Gastrocnemius medialis (tissue), 4 donors: ENCODE measurements at regions of chr7 and their contacts with region 1.

Region 1: GRCh38 chr7:105759670-105760550 is 116.5 kb downstream of the ATXN7L1 start:
- DNase-seq: no peak
- ATAC-seq: peak; percentile 60
- H3K4me3 ChIP-seq: no peak overlapping the region
- H3K27ac ChIP-seq: no peak overlapping the region
- H3K4me1 ChIP-seq: no peaks in the 10 kb centered on the region
- H3K27me3 ChIP-seq: no peaks in the 10 kb centered on the region
- CTCF ChIP-seq: peak; percentile 35 to 64 (median 59)
- POLR2A ChIP-seq: no peak

Region 2: DNA sequence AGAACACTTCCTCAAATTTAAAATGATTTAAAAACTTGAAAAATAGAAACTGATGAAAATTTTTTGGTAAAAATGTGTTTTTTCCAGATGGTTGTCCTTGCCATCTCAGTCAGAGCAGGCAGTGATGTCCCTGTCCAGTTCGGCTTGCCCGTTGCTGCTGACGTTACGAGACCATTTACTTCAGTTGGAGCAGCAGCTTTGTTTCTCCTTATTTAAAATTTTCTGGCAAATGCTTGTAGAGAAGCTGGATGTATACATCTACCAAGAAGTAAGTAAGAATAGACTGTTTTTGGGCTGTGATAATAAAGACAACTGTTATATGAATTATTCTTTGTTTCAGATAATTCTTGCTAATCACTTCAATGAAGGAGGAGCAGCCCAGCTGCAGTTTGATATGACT is 194.7 kb before region 1 on chr7:
- in situ Hi-C with region 1: no loop called
- intact Hi-C with region 1: no loop called
- DNase-seq: no peak
- ATAC-seq: no peak
- H3K4me3 ChIP-seq: no peak overlapping the region
- H3K27ac ChIP-seq: no peak overlapping the region
- H3K4me1 ChIP-seq: no peaks in the 10 kb centered on the region
- H3K27me3 ChIP-seq: no peaks in the 10 kb centered on the region
- CTCF ChIP-seq: no peak
- POLR2A ChIP-seq: no peak

Region 3: DNA sequence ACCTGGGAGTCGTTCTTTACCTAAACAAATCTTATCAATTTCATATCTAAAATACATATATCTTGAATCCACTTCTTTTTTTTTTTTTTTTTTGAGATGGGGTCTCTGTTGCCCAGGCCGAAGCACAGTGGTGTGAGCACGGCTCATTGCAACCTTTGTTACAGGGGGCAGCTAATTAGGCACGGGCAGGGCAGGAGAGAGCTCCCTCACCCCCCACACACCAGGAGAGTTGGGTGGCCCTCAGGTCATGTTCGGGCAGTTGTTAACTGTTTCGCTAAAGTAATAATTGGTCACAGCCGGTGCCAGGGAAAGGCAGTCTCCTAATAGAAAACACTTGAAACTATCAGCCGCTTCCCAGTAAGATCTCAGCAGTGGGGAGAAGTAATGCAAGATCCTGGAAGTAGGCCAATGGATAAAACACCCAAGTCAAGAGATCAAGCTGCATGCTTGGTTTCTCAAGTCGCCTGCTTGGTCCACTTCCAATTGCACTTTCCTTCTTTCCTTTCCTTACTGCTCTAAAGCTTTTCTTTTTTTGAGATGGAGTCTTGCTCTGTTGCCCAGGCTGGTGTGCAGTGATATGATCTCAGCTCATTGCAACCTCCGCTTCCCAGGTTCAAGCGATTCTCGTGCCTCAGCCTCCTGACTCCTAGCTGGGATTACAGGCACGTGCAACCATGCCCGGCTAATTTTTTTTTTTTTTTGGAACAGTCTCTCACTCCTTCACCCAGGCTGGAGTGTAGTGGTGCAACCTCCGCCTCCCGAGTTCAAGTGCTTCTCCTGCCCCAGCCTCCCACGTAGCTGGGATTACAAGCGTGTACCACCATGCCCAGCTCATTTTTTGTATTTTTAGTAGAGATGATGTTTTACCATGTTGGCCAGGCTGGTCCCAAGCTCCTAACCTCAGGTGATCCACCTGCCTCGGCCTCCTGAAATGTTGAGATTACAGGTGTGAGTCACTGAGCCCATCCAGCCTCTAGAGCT is 157.3 kb before region 1 on chr7:
- in situ Hi-C with region 1: no loop called
- intact Hi-C with region 1: no loop called
- DNase-seq: no peak
- ATAC-seq: no peak
- H3K4me3 ChIP-seq: no peak overlapping the region
- H3K27ac ChIP-seq: no peak overlapping the region
- H3K4me1 ChIP-seq: no peaks in the 10 kb centered on the region
- H3K27me3 ChIP-seq: no peaks in the 10 kb centered on the region
- CTCF ChIP-seq: no peak
- POLR2A ChIP-seq: no peak

Region 4: DNA sequence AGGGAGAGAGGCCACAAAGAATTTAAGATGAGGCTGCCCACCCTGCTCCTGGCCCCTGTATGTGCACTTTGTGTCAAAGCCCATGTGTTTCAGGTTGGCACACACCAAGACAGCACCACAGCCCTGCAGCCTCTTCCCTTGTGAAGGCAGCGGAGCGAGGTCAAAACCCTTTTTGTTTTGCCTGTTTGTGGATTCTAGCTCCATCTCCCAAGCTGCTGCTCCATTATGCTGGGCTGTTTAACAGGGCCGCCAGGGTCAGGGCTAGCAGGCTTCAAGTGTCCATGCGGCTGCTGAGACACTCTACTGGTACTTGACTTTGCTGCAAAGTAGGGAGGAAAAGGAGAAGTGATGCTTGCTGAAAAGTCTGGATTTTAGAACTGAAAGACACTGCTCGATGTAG is 36.3 kb before region 1 on chr7:
- in situ Hi-C with region 1: no loop called
- intact Hi-C with region 1: no loop called
- DNase-seq: no peak
- ATAC-seq: no peak
- H3K4me3 ChIP-seq: no peak overlapping the region
- H3K27ac ChIP-seq: no peak overlapping the region
- H3K4me1 ChIP-seq: peaks cover 7 to 15% of the 10 kb centered on the region in 2 donors
- H3K27me3 ChIP-seq: no peaks in the 10 kb centered on the region
- CTCF ChIP-seq: no peak
- POLR2A ChIP-seq: no peak

Region 5: DNA sequence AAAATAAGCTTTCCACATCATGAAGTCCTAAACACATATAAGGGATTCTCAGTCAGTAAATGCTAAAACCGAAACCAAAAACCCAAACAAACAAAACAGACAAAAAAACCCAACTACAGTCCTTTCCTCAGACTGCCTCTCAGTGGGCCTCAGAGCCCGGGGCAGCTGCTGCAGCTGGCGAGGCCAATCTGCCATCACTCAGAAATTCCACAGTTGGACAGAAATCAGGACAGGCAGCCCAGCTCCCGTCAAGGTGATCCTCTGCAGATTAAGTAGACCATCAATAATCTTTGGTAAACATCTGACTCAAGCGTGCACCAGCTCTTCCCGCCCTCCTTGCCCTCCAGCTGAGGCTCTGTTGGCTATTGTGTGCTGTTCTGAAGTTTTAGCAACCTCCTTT is 25.7 kb before region 1 on chr7:
- in situ Hi-C with region 1: no loop called
- intact Hi-C with region 1: loop called (anchors 2 kb)
- DNase-seq: no peak
- ATAC-seq: no peak
- H3K4me3 ChIP-seq: no peak overlapping the region
- H3K27ac ChIP-seq: no peak overlapping the region
- H3K4me1 ChIP-seq: no peaks in the 10 kb centered on the region
- H3K27me3 ChIP-seq: no peaks in the 10 kb centered on the region
- CTCF ChIP-seq: no peak
- POLR2A ChIP-seq: no peak

Region 6: GRCh38 chr7:105830391-105831301 is 70.7 kb after region 1 on chr7:
- in situ Hi-C with region 1: no loop called
- intact Hi-C with region 1: no loop called
- DNase-seq: no peak
- ATAC-seq: peak; percentile 36 to 81
- H3K4me3 ChIP-seq: no peak overlapping the region
- H3K27ac ChIP-seq: no peak overlapping the region
- H3K4me1 ChIP-seq: peaks cover 13 to 22% of the 10 kb centered on the region in 2 donors
- H3K27me3 ChIP-seq: no peaks in the 10 kb centered on the region
- CTCF ChIP-seq: no peak
- POLR2A ChIP-seq: no peak

Region 7: DNA sequence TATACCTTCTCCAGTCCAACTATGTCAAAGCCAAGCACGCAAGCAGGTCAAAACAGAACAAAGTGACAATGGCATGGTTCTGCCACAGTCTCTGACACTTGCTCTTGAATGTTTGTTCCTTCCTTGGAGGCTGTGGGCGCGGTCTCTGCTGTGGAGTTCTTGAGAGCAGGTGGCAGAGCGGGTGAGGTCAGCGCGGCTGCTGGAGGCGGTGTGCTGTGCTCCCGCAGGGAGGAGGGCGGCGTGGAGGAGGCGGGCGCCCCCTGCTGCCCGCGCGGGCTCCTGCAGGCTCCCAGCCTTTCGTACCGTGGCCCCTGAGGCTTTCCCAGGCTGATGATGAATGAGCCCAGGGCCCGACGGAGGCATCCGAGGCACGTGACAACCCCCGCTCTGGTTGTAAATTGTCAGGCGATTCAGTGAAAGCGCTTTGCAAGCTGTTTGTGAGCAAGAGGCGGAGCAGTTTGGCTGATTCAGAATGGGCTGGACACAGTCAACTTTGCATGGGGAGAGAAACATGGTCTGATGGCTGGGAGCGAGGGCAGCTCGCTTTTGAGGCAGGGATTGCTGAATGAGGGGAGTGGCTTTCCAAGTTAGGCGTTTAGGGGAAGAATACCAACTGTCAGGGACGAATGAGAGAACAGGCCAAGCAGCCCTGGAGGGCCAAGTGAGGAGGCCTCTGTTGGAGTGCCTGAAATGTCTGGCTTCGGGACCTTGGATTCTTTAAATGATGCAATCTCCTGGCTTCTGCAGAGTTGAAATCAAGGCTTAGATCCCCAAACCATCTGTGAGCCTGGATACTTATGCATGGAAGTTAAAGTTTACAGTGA is 249.7 kb after region 1 on chr7:
- in situ Hi-C with region 1: loop called in 3 of 4 experiments (anchors 10 to 25 kb)
- intact Hi-C with region 1: loop called (anchors 1 kb)
- DNase-seq: peak; percentile 43 to 67
- ATAC-seq: peak; percentile 82 to 93
- H3K4me3 ChIP-seq: peak overlapping the region in 1 of 4 donors; percentile 8
- H3K27ac ChIP-seq: no peak overlapping the region
- H3K4me1 ChIP-seq: peaks cover 0 to 7% of the 10 kb centered on the region in 2 donors
- H3K27me3 ChIP-seq: no peaks in the 10 kb centered on the region
- CTCF ChIP-seq: peak; percentile 94 to 98 (median 96)
- POLR2A ChIP-seq: no peak

Region 8: GRCh38 chr7:106041140-106041717 is 281.3 kb after region 1 on chr7:
- in situ Hi-C with region 1: loop called in 2 of 4 experiments (anchors 5 kb)
- intact Hi-C with region 1: loop called (anchors 1 kb)
- DNase-seq: no peak
- ATAC-seq: peak in 1 of 2 donors; percentile 43
- H3K4me3 ChIP-seq: no peak overlapping the region
- H3K27ac ChIP-seq: no peak overlapping the region
- H3K4me1 ChIP-seq: peaks cover 4 to 7% of the 10 kb centered on the region in 2 donors
- H3K27me3 ChIP-seq: no peaks in the 10 kb centered on the region
- CTCF ChIP-seq: peak; percentile 44 to 70 (median 53)
- POLR2A ChIP-seq: no peak

Region 9: DNA sequence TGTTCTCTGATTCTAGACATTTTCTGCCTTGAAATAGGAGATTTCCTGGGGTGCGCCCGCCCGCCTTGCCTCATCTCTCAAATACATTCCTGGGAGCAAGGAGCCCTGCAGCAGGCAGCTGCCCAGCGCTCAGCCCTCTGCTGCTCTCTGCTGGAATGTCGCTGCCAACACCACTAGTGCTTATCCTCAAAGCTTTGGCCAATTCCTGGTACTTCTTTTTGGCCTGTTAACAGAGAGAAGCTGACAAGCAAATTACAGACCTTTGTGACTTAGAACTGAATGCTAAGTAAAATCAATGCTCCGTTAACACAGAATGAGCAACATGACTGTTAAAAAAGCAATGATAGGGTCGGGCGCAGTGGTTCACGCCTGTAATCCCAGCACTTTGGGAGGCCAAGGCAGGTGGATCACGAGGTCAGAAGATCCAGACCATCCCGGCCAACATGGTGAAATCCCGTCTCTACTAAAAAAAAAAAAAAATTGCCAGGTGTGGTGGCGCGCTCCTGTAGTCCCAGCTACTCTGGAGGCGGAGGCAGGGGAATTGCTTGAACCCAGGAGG is 394.1 kb after region 1 on chr7:
- in situ Hi-C with region 1: loop called in 2 of 4 experiments (anchors 10 to 25 kb)
- intact Hi-C with region 1: no loop called
- DNase-seq: peak; percentile 66 to 79
- ATAC-seq: peak; percentile 89 to 98
- H3K4me3 ChIP-seq: peak overlapping the region in 2 of 4 donors; percentile 24 to 26
- H3K27ac ChIP-seq: no peak overlapping the region
- H3K4me1 ChIP-seq: peaks cover 13 to 19% of the 10 kb centered on the region in 2 donors
- H3K27me3 ChIP-seq: no peaks in the 10 kb centered on the region
- CTCF ChIP-seq: peak; percentile 95 to 98 (median 97)
- POLR2A ChIP-seq: no peak

Region 10: DNA sequence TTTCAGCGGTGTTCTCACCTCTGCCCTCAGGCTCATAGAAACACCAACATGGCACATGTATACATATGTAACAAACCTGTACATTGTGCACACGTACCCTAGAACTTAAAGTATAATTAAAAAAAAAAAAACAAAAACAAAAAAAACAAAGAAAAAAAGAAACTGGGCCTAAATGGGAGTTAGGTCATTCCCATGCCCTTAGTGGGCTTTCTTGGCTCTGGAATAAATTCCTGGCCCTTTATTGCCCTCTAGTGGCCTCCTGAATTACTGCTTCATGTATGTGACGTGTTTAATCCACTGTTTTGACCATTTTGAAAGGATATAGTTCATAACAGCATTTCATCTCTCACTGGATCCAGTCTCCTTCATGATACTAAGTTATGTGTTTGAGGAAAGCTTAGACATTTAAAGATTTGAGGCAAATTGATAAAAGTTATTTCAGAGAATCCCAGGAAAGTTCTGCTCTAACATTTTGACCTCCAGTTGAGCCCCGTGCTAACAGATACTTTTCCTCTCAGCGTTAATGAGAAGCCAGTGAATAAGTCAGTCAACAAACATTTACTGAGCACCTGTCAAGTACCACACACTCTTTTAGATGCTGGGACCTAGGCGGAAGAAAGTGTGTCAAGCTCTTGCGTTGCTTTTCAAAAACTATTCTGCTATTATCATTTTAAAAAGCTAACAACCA is 406.9 kb after region 1 on chr7:
- in situ Hi-C with region 1: loop called in 2 of 4 experiments (anchors 10 to 25 kb)
- intact Hi-C with region 1: no loop called
- DNase-seq: no peak
- ATAC-seq: peak; percentile 66 to 86
- H3K4me3 ChIP-seq: peak overlapping the region in 1 of 4 donors; percentile 17
- H3K27ac ChIP-seq: peak overlapping the region in 3 of 4 donors; percentile 26 to 38 (median 35)
- H3K4me1 ChIP-seq: peaks cover 19 to 20% of the 10 kb centered on the region in 2 donors
- H3K27me3 ChIP-seq: no peaks in the 10 kb centered on the region
- CTCF ChIP-seq: peak; percentile 75 to 85 (median 81)
- POLR2A ChIP-seq: no peak